H1 (cell line): ENCODE measurements at regions of chr3 and their contacts with region 1.

Region 1: DNA sequence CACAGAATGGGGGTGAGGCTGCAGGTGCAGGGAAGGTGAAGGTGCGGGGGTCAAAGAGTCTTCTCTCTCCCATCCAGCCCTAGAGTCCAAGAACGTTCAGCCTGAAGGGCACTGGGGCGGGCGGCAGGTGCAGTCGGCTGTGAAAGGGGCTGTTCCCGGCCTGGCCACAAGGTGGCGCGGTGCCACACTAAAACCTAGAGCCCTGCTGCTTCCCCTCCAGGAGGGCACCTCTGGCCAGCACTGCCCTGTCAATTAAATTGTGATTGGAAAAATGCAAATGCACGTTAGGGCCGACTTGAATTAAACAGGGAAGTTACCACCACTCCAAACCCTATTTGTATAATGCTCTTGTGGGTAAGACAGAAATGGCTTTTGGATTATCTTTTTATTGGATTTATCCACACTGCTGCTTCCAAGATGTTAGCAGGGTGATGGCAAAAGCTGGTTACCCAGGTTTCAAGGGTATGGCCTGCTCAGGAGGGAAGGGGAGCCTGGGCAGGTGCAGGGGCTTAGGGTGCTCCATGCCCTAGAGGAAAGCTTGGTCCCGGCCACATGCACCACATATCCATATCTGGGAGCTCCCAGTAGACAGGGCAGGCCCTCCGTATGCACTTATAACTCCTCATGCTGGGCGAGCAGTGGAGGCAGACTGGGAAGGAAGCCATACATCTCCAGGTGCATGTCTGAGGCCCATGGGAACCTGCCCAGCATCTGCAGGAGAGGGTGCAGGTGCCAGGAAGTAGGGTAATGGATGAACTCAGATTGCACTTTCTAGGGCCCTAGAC is 119.8 kb downstream of the ADCY5 start:
- DNase-seq: peak in 1 of 2 experiments; percentile 96
- H3K4me3 ChIP-seq: no peak overlapping the region
- H3K27ac ChIP-seq: no peak overlapping the region
- H3K4me1 ChIP-seq: peaks cover 0 to 5% (median 1%) of the 10 kb centered on the region in 4 experiments; a peak in 3 of 7 replicates
- H3K27me3 ChIP-seq: no peaks in the 10 kb centered on the region
- CTCF ChIP-seq: peak in 2 of 3 experiments; percentile 90 to 94; a peak in 3 of 4 replicates
- EP300 ChIP-seq: no peak
- POLR2A ChIP-seq: no peak
- RAD21 ChIP-seq: peak; percentile 86 to 88

Region 2: DNA sequence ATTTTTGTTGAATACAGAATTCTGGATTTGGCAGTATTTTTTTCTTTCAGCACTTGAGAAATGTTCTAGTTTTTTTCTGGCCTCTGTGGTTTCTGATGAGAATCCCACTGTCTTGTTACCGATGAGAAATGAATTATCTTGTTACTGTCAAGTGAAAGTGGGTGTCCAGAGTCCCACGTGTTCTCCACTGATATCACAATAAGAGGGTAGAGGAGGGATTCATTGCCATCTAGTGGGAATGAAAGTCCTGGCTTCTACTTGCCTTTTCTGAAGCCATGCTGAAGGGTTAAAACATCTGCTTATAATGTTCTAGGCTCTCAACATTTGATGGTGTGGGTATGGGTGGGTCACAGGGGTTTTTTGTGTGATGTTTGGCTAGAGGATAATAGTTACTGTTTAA is 61.2 kb before region 1 on chr3:
- CTCF ChIA-PET with region 1: no interaction called
- POLR2A ChIA-PET with region 1: no interaction called
- DNase-seq: no peak
- H3K4me3 ChIP-seq: no peak overlapping the region
- H3K27ac ChIP-seq: no peak overlapping the region
- H3K4me1 ChIP-seq: 0 out of 7 replicates have a peak, but pooled peaks cover 0 to 3% (median 0%) of the 10 kb centered on the region in 4 experiments
- H3K27me3 ChIP-seq: no peaks in the 10 kb centered on the region
- CTCF ChIP-seq: peak in 2 of 3 experiments; percentile 19 to 37; a peak in 1 of 4 replicates
- EP300 ChIP-seq: no peak
- POLR2A ChIP-seq: no peak
- RAD21 ChIP-seq: peak; percentile 47 to 61

Region 3: GRCh38 chr3:123286308-123287023 is 42.6 kb before region 1 on chr3:
- CTCF ChIA-PET with region 1: interaction called, 13 read pairs
- POLR2A ChIA-PET with region 1: no interaction called
- DNase-seq: peak; percentile 34 to 84
- H3K4me3 ChIP-seq: no peak overlapping the region
- H3K27ac ChIP-seq: no peak overlapping the region; the same call in 1 of the 2 replicates
- H3K4me1 ChIP-seq: no peaks in the 10 kb centered on the region; a peak in 1 of 7 replicates
- H3K27me3 ChIP-seq: no peaks in the 10 kb centered on the region
- CTCF ChIP-seq: peak in 2 of 3 experiments; percentile 95 to 96; a peak in 3 of 4 replicates
- EP300 ChIP-seq: no peak
- POLR2A ChIP-seq: no peak
- RAD21 ChIP-seq: peak; percentile 67 to 80

Region 4: DNA sequence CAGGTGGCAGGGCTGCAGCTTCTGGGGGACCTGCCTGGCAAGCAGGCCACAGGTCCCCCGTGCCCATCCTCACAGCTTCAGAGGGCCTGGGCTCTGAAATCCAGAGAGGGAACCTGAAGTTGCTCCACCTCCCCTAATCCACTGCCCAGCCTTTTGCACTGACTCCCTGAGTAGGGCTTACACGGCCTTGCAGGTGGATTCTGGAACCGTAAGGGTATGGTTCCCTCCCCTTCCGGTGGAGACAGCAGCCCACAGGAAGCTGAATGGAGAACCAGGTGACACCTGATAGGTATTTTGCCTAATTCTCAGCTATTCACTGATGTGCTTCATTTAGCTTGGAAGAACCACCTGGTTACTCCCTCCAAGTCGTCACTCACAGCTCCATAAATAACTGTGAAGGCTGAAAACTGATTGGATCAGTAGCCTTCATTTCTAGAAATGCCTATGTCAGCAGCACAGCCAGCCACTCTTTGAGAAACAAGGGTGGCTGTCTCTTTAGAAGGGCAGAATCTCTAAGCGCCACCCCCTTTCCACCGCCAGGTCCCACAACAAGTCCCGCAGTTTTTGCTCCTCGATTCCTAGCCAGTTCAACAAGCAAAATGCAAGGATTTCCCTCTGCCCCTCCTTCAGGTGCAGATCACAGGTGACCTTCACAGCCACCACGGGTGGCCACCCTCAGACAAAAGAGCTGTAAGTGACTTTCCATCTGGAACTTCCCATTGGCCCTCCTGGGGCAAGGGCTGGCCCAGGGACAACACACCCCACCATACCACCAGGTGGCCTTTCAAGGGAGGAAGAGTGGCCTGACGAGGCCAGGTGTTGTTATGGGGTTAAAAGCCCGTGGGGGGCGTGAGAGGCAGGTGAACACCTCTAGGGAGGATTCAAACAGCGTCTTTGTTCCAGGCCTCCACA is 14.4 kb before region 1 on chr3:
- CTCF ChIA-PET with region 1: interaction called, 245 read pairs
- POLR2A ChIA-PET with region 1: interaction called, 29 read pairs
- DNase-seq: peak; percentile 90 to 93
- H3K4me3 ChIP-seq: peak overlapping the region in 3 of 4 experiments; percentile 20 to 50 (median 33); a peak in 7 of 8 replicates
- H3K27ac ChIP-seq: peak overlapping the region; percentile 78; the same call in 1 of the 2 replicates
- H3K4me1 ChIP-seq: peaks cover 25 to 60% (median 37%) of the 10 kb centered on the region in 4 experiments
- H3K27me3 ChIP-seq: no peaks in the 10 kb centered on the region; a peak in 1 of 7 replicates
- CTCF ChIP-seq: peak in 2 of 3 experiments; percentile 49 to 56; a peak in 3 of 4 replicates
- EP300 ChIP-seq: peak in 1 of 2 experiments; percentile 91; a peak in 1 of 3 replicates
- POLR2A ChIP-seq: peak in 1 of 2 experiments; percentile 40; a peak in 2 of 3 replicates
- RAD21 ChIP-seq: peak; percentile 9 to 24; a peak in 2 of 4 replicates

Region 5: GRCh38 chr3:123352134-123352890 is 23.3 kb after region 1 on chr3:
- CTCF ChIA-PET with region 1: interaction called, 34 read pairs
- POLR2A ChIA-PET with region 1: no interaction called
- DNase-seq: no peak
- H3K4me3 ChIP-seq: no peak overlapping the region
- H3K27ac ChIP-seq: no peak overlapping the region
- H3K4me1 ChIP-seq: peaks cover 0 to 14% (median 5%) of the 10 kb centered on the region in 4 experiments; a peak in 3 of 7 replicates
- H3K27me3 ChIP-seq: no peaks in the 10 kb centered on the region
- CTCF ChIP-seq: no peak
- EP300 ChIP-seq: no peak
- POLR2A ChIP-seq: no peak
- RAD21 ChIP-seq: no peak

Region 6: DNA sequence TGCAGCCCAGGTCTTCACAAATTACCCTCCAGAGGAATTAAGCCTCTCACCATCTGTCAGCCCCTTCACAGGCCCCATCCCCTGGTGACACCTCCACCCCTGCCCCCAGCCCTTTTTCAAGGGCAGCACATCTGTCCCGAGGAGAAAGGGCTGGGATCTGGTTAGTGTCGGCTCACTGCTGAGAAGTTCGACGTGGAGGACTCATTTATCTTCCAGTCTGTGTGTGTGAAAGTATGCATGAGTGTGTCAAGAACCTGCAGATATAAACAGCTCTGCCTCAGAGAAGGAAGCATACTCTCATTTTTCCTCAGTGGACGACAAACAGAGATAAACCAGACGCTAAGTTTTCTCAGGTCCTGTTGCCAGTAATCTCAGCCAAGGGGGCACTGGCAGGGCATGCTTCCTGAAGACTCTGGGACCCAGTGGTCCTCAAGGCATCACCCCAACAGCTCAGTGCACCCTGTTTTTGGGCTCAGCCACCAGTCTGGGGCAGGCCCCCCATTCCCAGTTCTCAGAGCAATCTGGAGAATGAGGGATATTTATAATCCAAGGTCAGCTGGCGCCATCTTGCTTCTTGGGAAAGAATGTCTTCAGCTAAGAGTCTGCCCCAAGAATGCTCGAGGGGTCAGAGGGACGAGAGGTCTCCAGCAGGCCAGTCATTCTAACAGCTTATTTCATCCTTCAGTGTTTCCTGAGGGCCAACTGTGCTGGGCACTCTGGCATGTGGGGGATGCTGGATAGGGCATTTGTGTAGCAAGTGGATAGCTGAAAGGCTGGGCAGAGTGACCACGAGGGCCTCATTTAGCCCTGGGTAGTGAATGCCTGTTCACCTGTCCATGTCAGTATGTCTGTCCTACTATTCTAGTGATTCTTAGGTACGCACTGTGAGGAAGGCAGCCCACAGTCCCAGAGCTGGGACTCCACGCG is 46.2 kb after region 1 on chr3:
- CTCF ChIA-PET with region 1: interaction called, 43 read pairs
- POLR2A ChIA-PET with region 1: no interaction called
- DNase-seq: no peak
- H3K4me3 ChIP-seq: no peak overlapping the region
- H3K27ac ChIP-seq: no peak overlapping the region
- H3K4me1 ChIP-seq: peaks cover 0 to 4% (median 0%) of the 10 kb centered on the region in 4 experiments; a peak in 1 of 7 replicates
- H3K27me3 ChIP-seq: peaks cover 0 to 2% (median 0%) of the 10 kb centered on the region in 4 experiments; a peak in 1 of 7 replicates
- CTCF ChIP-seq: peak; percentile 29 to 67 (median 54)
- EP300 ChIP-seq: no peak
- POLR2A ChIP-seq: no peak
- RAD21 ChIP-seq: peak; percentile 77 to 84

Region 7: GRCh38 chr3:123489400-123490004 is 160.5 kb after region 1 on chr3:
- CTCF ChIA-PET with region 1: interaction called, 48 read pairs
- POLR2A ChIA-PET with region 1: no interaction called
- DNase-seq: peak; percentile 62 to 96
- H3K4me3 ChIP-seq: no peak overlapping the region
- H3K27ac ChIP-seq: no peak overlapping the region
- H3K4me1 ChIP-seq: no peaks in the 10 kb centered on the region
- H3K27me3 ChIP-seq: no peaks in the 10 kb centered on the region
- CTCF ChIP-seq: peak; percentile 85 to 95 (median 93)
- EP300 ChIP-seq: no peak
- POLR2A ChIP-seq: no peak
- RAD21 ChIP-seq: peak; percentile 99